Activated CD4-positive, alpha-beta T cell treated with anti-CD3 and anti-CD28 coated beads for 36 hours (primary cell): ENCODE measurements at regions of chr6 and their contacts with region 1.

Region 1: DNA sequence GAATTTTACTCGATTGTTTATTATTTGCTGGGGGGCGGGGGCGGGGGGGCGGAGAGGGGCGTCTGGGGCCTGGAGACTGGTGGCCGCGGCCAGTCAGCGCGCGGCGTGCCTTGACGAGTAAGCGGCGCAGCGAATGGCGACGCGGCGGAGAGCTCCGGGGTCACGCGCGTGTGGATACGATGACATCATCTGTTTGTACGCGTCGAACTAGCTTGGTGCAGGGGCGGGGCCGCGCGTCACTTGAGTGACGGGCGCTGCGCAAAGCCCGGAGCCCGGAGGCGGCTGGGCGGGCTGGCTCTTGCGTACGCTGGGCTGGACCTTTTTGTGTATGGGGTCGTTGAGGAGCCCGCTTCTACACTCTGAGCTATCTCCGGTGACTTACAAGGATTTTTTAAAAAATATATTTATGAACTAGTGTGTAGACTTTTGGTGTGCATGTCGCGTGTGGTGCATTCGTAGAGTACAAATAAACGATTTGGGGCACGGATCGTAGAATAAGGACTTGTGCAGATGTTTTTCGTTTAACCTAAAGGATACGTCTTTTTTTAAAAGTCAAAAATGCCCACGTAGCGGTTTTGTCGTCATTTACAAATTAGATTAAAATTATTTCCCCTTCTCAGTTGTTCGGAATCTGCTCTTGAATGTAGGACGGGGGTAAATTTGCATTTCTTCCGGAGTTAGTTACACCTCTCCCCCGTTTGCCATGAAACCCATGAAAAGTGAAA is 2.2 kb upstream of the FOXO3 start:
- DNase-seq: peak; percentile 98
- ATAC-seq: peak; percentile 71
- H3K4me3 Mint-ChIP-seq: peak overlapping the region; percentile 83
- H3K27ac Mint-ChIP-seq: peak overlapping the region; percentile 89
- H3K4me1 Mint-ChIP-seq: peaks cover 21% of the 10 kb centered on the region
- H3K27me3 Mint-ChIP-seq: peaks cover 14% of the 10 kb centered on the region

Region 2: DNA sequence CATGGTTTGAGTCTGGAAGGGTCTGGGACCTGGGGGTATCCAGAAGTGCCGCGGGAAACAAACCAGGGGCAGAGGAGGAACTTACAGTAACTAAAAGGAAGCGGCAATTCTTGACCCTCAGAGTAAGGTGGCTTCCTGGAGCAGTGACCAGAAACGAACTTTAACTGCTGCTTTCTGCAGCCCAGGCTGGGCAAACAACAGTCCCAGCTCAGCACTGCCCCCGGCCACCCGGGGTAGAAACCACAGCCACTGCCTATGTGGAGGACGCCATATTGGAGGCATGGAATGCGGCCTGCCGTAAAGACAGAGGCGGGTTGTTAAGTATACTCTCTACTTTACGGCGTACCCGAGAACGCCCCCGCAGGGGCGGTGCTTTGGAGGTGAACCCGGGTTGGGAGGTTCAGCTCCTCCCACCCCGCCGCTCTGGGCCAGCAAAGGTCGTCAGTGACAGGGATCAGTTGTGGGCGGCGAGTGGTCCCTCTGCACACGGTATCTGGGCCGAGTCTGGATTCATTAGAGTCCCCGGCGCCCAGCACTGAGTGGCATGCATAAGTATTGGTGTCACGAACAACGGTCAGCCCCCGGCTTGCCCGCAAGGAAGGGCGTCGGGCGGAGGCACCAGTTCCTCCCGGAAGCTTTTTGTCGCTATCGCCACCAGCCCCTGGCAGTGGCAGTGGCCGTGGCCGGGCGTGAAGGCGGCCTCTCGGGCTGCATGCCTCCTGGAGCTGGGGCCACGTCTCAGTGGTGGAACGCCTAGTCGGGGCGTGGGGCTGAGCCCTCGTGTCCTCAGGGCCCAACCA is 1099.1 kb before region 1 on chr6 and contains the start of gene PDSS2:
- CTCF ChIA-PET with region 1: no interaction called
- POLR2A ChIA-PET with region 1: no interaction called
- intact Hi-C with region 1: loop called in 1 of 2 experiments (anchors 5 kb)
- DNase-seq: peak; percentile 100
- ATAC-seq: peak; percentile 96
- H3K4me3 Mint-ChIP-seq: peak within 1 kb of the TSS; percentile 82
- H3K27ac Mint-ChIP-seq: peak within 1 kb of the TSS; percentile 93
- H3K4me1 Mint-ChIP-seq: peaks cover 19% of the 10 kb centered on the region
- H3K27me3 Mint-ChIP-seq: no peaks in the 10 kb centered on the region
- total RNA-seq, gene PDSS2: 11.4 to 11.7 TPM

Region 3: DNA sequence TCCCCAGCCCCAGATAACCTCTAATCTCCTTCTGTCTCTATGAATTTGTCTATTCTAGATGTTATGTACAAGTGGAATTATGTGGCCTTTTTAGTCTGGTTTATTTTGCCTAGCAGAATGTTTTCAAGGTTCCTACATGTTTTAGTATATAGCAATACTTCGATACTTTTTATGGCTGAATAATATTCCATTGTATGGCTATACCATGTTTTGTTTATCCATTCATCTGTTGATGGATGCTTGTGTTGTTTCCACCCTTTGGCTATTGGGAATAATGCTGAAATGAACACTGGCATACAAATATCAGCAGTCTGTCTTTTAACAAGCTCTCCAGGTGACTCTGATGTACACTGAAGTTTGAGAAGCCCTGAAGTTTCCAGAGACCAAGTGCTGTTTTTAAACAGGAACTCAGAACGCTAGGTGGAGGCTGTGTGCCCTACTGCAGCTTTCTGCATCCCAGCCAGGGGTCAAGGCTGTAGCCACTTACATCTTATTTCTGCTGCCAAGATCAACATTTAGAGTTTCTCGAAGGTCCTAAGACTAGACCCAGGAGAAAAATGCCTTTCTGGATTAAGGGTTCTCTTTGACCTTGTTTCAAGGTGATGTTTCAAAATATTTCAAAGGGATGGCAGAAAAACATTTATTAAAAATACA is 945.6 kb before region 1 on chr6:
- CTCF ChIA-PET with region 1: no interaction called
- POLR2A ChIA-PET with region 1: no interaction called
- intact Hi-C with region 1: no loop called
- DNase-seq: no peak
- ATAC-seq: no peak
- H3K4me3 Mint-ChIP-seq: no peak overlapping the region
- H3K27ac Mint-ChIP-seq: no peak overlapping the region
- H3K4me1 Mint-ChIP-seq: peaks cover under 1% of the 10 kb centered on the region
- H3K27me3 Mint-ChIP-seq: no peaks in the 10 kb centered on the region

Region 4: DNA sequence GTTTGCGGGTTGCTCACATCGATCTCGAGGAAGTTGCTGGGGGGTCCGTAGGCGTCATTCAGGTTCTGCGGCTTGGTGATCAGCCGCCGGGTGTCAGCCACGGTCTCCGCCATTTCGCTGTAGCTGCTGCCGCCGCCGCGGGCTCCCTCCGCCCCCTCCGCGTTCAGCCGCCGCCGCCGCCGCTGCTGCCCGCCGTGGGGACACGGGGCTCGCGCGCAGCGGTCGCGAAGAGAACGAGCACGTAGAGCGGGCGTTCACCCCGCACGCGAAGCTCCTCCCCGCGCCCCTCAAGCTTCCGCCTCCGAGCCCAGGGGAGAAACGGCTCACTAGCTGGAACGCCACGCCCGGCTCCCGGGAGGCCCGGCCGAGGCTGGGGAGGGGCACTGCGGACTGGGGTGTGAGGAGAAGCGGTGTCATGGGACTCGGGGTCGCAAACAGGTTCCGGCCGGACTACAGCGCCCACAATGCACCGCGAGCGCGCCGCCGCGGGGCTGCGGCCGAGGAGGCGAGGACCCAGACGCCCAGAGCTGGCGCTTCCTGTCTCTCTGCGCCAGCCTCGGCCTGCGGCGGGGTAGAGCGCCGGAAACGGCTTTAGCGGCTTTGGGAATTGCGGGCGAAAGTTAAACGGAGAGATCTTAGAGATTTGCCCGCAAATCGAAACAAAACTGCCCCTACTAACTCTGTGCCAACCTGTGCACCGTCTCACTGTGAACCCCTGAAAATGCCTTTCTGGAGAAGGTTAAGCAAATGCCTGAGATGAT is 297.5 kb before region 1 on chr6 and contains the start of gene SNX3:
- CTCF ChIA-PET with region 1: interaction called, 4 read pairs
- POLR2A ChIA-PET with region 1: interaction called, 3 read pairs
- intact Hi-C with region 1: loop called (anchors 1 to 2 kb)
- DNase-seq: peak; percentile 94
- ATAC-seq: peak; percentile 93
- H3K4me3 Mint-ChIP-seq: peak within 1 kb of the TSS; percentile 80
- H3K27ac Mint-ChIP-seq: peak within 1 kb of the TSS; percentile 89
- H3K4me1 Mint-ChIP-seq: peaks cover 23% of the 10 kb centered on the region
- H3K27me3 Mint-ChIP-seq: no peaks in the 10 kb centered on the region
- total RNA-seq, gene SNX3: 77.1 to 112 TPM

Region 5: DNA sequence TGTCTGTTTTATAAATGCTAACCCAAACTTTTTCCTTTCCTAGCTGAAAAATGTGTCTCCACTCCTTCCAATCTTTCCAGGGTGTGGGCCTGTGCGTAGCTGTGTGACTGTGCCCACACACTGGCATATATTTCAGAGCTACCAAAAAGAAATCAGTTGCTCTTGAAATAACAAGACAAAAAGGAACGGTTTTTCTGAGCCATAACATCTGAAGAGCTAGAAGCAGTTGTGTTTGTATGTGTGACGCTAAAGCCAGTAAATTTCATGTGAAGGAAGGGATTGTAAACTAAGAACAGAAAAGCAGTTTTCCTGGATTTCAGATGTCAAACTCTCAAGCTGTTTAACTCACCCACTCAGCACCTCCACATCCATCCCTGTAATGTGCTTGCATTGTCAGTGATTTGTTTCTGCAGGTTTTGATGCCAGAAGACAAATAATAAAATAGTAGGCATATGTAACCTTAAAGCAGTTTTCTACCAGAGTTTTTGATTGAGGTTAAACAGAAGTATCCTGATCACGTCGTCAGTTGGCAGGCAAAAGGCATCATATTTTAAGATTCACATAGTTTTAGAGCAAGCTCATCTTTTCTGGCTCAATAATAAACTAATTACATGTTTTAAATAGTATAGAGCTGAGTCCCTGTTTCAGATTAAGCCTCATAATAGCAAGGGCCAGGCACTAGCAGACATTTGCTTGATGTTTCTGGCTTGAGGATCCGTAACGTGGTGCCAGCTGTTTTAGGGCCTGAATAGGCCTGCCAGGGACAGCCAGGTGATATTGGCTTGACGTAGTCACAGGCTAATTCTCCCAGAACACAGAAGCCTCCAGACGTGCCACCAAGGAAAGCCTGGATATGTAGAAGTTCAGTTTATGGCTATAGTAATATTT is 93.0 kb after region 1 on chr6:
- CTCF ChIA-PET with region 1: no interaction called
- POLR2A ChIA-PET with region 1: interaction called, 11 read pairs
- intact Hi-C with region 1: no loop called
- DNase-seq: no peak
- ATAC-seq: no peak
- H3K4me3 Mint-ChIP-seq: no peak overlapping the region
- H3K27ac Mint-ChIP-seq: no peak overlapping the region
- H3K4me1 Mint-ChIP-seq: peaks cover 19% of the 10 kb centered on the region
- H3K27me3 Mint-ChIP-seq: no peaks in the 10 kb centered on the region

Region 6: GRCh38 chr6:108848116-108848868 is 289.8 kb after region 1 on chr6 and contains the start of gene ARMC2:
- CTCF ChIA-PET with region 1: interaction called, 3 read pairs
- POLR2A ChIA-PET with region 1: interaction called, 6 read pairs
- intact Hi-C with region 1: loop called in 1 of 2 experiments (anchors 1 kb)
- DNase-seq: peak; percentile 91
- ATAC-seq: peak; percentile 93
- H3K4me3 Mint-ChIP-seq: peak within 1 kb of the TSS; percentile 78
- H3K27ac Mint-ChIP-seq: peak within 1 kb of the TSS; percentile 74
- H3K4me1 Mint-ChIP-seq: peaks cover 23% of the 10 kb centered on the region
- H3K27me3 Mint-ChIP-seq: no peaks in the 10 kb centered on the region
- total RNA-seq, gene ARMC2: 3.9 to 5.2 TPM

Region 7: DNA sequence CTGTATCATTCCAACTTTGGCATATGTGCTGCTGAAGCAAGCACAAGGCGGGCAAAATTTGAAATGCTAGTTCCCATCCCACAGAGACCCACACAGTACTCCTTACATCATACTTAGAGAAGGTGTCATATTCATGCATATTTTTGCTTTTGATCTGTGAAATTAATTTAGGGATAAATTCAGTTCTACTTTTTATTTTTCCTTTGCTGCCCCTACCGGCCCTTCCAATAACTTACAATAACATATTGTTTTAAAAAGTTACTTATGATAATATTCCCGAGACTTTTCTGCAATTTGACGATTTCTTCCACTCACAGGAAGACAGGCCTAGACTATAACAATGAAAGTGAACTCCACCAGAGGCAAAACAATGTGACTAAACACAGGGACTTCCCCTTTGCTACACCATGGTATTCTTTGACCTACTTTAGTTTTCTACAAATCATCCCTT is 501.1 kb after region 1 on chr6:
- CTCF ChIA-PET with region 1: no interaction called
- POLR2A ChIA-PET with region 1: no interaction called
- intact Hi-C with region 1: no loop called
- DNase-seq: no peak
- ATAC-seq: peak; percentile 100
- H3K4me3 Mint-ChIP-seq: peak overlapping the region; percentile 51
- H3K27ac Mint-ChIP-seq: peak overlapping the region; percentile 89
- H3K4me1 Mint-ChIP-seq: peaks cover 47% of the 10 kb centered on the region
- H3K27me3 Mint-ChIP-seq: no peaks in the 10 kb centered on the region

Region 8: GRCh38 chr6:109095027-109095834 is 536.7 kb after region 1 on chr6 and contains the start of gene CEP57L1:
- CTCF ChIA-PET with region 1: interaction called, 4 read pairs
- POLR2A ChIA-PET with region 1: interaction called, 5 read pairs
- intact Hi-C with region 1: loop called (anchors 1 to 2 kb)
- DNase-seq: peak; percentile 97
- ATAC-seq: peak; percentile 79
- H3K4me3 Mint-ChIP-seq: peak within 1 kb of the TSS; percentile 91
- H3K27ac Mint-ChIP-seq: peak within 1 kb of the TSS; percentile 99
- H3K4me1 Mint-ChIP-seq: peaks cover 46% of the 10 kb centered on the region
- H3K27me3 Mint-ChIP-seq: no peaks in the 10 kb centered on the region
- total RNA-seq, gene CEP57L1: 23.8 to 36.9 TPM

Region 9: GRCh38 chr6:109440331-109441068 is 882.0 kb after region 1 on chr6 and contains the starts of genes PPIL6 and SMPD2:
- CTCF ChIA-PET with region 1: no interaction called
- POLR2A ChIA-PET with region 1: no interaction called
- intact Hi-C with region 1: loop called in 1 of 2 experiments (anchors 1 kb)
- DNase-seq: peak; percentile 86
- ATAC-seq: peak; percentile 85
- H3K4me3 Mint-ChIP-seq: peak within 1 kb of the TSS; percentile 89
- H3K27ac Mint-ChIP-seq: peak within 1 kb of the TSS; percentile 85
- H3K4me1 Mint-ChIP-seq: peaks cover 18% of the 10 kb centered on the region
- H3K27me3 Mint-ChIP-seq: no peaks in the 10 kb centered on the region
- total RNA-seq, gene PPIL6: 0.09 TPM in 1 of 2 experiments, not detected in the other
- total RNA-seq, gene SMPD2: 7.5 to 9.5 TPM